ENCODE measurements at regions of chr13 and their contacts with region 1.

Region 1: DNA sequence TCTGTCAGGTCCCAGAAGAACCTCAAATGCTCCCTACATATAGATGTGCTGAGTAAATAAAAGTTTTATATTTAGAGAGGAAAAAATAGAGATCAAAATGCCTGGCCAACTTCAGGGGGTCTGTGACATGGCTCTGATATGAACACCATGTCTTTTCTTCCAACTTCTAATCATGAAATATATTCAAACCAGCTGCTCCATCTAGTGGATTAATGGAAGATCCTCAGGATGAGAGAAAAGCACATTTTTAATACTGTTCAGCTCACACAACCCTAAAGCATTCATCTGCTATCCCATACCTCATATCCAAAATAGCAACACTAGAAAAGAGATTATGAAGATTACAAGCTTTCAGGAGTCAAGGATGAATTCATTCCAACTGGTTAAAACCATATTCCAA is 56.0 kb upstream of the DOCK9 start:
- DNase-seq: peak in 1 of 42 donors; percentile 17

Region 2: GRCh38 chr13:98842864-98843481 is 190.8 kb before region 1 on chr13:
- intact Hi-C with region 1: loop called (anchors 5 kb)
- DNase-seq: peak; percentile 36 to 88 (median 76)

Measured in head of caudate nucleus (tissue), 42 donors.